WTC11 (cell line): ENCODE measurements at regions of chr1 and their contacts with region 1.

Region 1: DNA sequence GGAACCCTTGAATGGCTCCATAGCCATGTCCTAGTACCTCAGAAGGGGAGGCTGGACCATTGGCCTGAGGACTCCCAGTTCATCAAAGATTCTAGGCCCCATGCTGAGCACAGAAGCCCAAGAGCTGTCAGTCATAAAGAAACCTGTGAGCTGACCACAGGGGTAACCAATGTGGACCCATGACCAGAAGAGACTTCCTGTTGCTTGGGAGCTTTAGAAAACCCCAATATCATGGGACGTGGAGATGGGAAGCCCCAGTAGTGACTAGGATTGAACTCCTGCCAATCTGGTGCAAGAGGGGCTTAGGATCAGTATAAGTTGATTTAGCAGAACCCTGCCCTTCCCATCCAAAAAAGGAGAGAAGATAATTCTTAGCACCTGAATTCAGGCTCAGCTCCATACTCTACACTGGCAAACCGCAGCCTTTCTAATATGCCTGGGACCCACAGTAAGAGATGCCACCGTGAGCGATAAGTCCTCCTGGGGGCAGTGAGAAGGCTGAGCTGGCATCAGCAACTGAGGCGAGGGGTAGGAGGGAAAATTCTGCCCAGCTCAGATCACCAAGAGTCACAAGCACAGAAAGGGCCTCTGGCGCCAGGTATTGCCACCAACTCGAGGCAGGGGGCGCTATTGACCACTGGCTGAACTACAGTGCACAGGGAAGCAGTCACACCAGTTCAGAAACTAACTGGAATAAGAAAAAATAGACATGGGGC is 108.9 kb downstream of the CAPN8 start:
- DNase-seq: peak; percentile 86
- ATAC-seq: peak; percentile 95
- H3K4me3 Mint-ChIP-seq: no peak overlapping the region
- H3K27ac Mint-ChIP-seq: no peak overlapping the region
- H3K4me1 Mint-ChIP-seq: no peaks in the 10 kb centered on the region
- H3K27me3 Mint-ChIP-seq: no peaks in the 10 kb centered on the region
- CTCF ChIP-seq: peak; percentile 77

Region 2: GRCh38 chr1:223403184-223403815 is 153.3 kb before region 1 on chr1:
- CTCF ChIA-PET with region 1: no interaction called
- POLR2A ChIA-PET with region 1: no interaction called
- DNase-seq: no peak
- ATAC-seq: no peak
- H3K4me3 Mint-ChIP-seq: no peak overlapping the region
- H3K27ac Mint-ChIP-seq: no peak overlapping the region
- H3K4me1 Mint-ChIP-seq: peaks cover 10% of the 10 kb centered on the region
- H3K27me3 Mint-ChIP-seq: peaks cover 2% of the 10 kb centered on the region; the same call in 1 of the 2 replicates
- CTCF ChIP-seq: no peak

Region 3: DNA sequence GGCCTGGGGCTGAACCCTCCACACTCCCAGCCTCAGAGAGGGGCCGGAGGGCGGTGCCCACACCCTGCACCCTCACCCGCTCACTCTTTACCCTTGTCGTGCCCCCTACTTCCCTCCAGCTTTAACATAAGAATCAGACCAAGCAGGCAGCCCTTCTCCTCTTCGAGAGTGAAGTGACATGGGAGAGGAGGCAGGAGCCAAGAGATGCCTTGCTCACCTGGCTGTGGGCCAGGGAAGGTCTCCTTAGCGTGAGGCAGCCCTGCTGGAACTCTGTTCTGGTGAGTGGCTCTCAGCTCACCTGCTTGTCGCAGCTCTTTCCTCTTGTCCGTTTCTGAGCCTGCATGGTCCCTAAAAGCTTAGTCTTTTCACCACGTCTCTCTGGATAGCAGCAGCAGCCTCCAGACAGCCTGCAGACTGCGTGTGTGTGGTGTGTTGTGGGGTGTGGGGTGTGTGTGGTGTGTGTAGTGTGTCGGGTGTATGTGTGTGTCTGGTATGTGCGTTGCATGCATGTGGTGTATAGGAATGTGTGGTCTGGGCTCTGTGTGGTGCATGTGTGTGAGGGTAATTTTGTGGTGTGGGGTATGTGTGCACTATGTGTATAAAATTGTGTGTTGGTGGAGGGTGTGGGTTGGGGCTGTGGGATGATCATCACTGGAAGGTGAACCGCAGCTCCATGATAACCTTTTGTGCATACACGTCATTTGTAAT is 76.7 kb before region 1 on chr1:
- CTCF ChIA-PET with region 1: interaction called, 10 read pairs
- POLR2A ChIA-PET with region 1: no interaction called
- DNase-seq: no peak
- ATAC-seq: peak; percentile 84
- H3K4me3 Mint-ChIP-seq: peak overlapping the region; percentile 34
- H3K27ac Mint-ChIP-seq: no peak overlapping the region; the same call in 1 of the 2 replicates
- H3K4me1 Mint-ChIP-seq: peaks cover 14% of the 10 kb centered on the region
- H3K27me3 Mint-ChIP-seq: no peaks in the 10 kb centered on the region; the same call in 1 of the 2 replicates
- CTCF ChIP-seq: no peak

Region 4: DNA sequence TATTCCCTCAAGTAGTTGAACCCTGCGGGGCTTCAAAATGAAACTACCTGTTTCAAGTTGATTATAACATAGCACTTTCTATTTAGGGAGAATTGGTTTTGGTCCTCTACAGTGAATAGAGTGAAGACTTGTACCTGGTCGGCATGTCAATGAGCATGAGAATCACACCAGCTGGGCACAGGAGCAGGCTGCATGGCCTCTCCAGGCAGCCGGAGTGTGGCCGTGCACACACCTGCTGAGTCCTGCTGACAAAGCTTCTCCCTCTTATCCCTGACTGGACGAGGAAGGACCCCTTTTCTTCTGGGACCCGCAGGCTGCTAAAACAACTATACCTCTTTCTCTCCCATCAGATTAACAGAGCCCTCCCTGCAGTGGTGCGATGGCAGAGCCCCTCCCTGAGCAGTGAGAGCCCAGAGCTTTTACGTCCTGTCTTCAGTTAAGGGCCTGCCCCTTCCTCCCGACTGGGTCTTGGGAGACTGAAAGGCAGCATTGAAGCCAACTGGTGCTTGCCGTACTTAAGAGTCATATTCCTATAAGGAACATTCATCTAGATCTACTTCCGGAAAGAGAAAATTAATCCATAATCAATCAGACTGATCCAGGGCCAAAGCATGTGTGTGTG is 16.0 kb before region 1 on chr1:
- CTCF ChIA-PET with region 1: interaction called, 17 read pairs
- POLR2A ChIA-PET with region 1: no interaction called
- DNase-seq: no peak
- ATAC-seq: no peak
- H3K4me3 Mint-ChIP-seq: no peak overlapping the region
- H3K27ac Mint-ChIP-seq: no peak overlapping the region
- H3K4me1 Mint-ChIP-seq: no peaks in the 10 kb centered on the region
- H3K27me3 Mint-ChIP-seq: no peaks in the 10 kb centered on the region; the same call in 1 of the 2 replicates
- CTCF ChIP-seq: no peak

Region 5: GRCh38 chr1:223621312-223621734 is 64.8 kb after region 1 on chr1:
- CTCF ChIA-PET with region 1: interaction called, 24 read pairs
- POLR2A ChIA-PET with region 1: no interaction called
- DNase-seq: no peak
- ATAC-seq: no peak
- H3K4me3 Mint-ChIP-seq: no peak overlapping the region
- H3K27ac Mint-ChIP-seq: no peak overlapping the region; the same call in 1 of the 2 replicates
- H3K4me1 Mint-ChIP-seq: peaks cover 9% of the 10 kb centered on the region
- H3K27me3 Mint-ChIP-seq: no peaks in the 10 kb centered on the region
- CTCF ChIP-seq: no peak

Region 6: GRCh38 chr1:223652436-223652941 is 95.9 kb after region 1 on chr1:
- CTCF ChIA-PET with region 1: interaction called, 13 read pairs
- POLR2A ChIA-PET with region 1: no interaction called
- DNase-seq: no peak
- ATAC-seq: peak; percentile 70
- H3K4me3 Mint-ChIP-seq: no peak overlapping the region
- H3K27ac Mint-ChIP-seq: no peak overlapping the region
- H3K4me1 Mint-ChIP-seq: peaks cover 26% of the 10 kb centered on the region
- H3K27me3 Mint-ChIP-seq: peaks cover 3% of the 10 kb centered on the region; the same call in 1 of the 2 replicates
- CTCF ChIP-seq: no peak

Region 7: DNA sequence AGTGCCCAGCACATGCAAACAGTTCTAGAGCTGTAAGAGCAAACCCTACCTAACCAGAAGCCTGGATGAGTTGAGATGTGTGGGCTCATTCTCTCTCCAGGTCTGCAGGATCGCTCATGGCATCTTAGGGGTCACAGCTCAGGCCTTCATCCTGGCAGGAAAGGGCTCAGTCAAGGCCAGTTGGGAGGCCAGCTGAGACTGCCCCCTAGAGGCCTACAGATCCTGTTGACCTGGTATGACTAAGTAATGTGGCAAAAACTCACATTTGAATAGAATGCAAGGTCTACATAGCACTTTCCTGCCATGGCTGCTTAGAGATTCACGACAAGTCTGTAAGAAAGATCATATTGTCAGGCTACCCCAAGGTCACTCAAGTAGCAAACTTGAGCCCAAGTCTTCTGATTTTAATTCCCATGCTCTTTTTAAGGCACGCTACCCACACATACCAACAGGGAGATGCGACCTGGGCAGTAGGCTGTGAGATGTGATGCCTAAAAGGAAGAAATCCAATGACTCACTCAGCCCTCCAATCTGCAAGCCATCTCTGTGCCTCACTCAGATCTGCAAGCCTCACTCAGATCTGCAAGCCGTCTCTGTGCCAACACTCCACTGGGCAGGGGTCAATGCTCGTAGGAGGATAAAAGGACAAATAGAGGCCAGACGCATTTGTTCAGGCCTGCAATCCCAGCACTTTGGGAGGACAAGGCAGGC is 114.0 kb after region 1 on chr1:
- CTCF ChIA-PET with region 1: interaction called, 13 read pairs
- POLR2A ChIA-PET with region 1: no interaction called
- DNase-seq: peak; percentile 66
- ATAC-seq: peak; percentile 97
- H3K4me3 Mint-ChIP-seq: no peak overlapping the region
- H3K27ac Mint-ChIP-seq: no peak overlapping the region
- H3K4me1 Mint-ChIP-seq: peaks cover 3% of the 10 kb centered on the region; the same call in 1 of the 2 replicates
- H3K27me3 Mint-ChIP-seq: peaks cover 10% of the 10 kb centered on the region
- CTCF ChIP-seq: peak; percentile 63; the same call in 1 of the 2 replicates

Region 8: DNA sequence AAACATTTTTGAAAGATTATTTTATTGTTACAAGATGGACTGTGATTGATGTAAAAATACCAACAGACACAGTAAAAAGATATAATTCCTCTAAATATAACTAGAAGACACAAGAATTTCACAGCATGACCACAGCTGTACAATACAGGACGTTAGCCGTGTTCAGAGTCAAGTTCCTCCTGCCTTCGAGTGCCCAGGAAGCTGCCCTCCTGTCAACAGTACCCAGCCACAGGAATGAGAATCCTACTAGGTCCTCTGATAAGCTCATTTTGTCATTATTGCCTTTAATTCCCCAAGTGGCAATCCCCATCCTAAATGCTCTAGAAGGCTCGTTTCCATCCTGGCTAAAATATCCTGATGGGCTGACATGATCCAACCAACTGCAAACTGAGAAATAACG is 139.4 kb after region 1 on chr1:
- CTCF ChIA-PET with region 1: interaction called, 11 read pairs
- POLR2A ChIA-PET with region 1: no interaction called
- DNase-seq: no peak
- ATAC-seq: no peak
- H3K4me3 Mint-ChIP-seq: no peak overlapping the region
- H3K27ac Mint-ChIP-seq: no peak overlapping the region
- H3K4me1 Mint-ChIP-seq: no peaks in the 10 kb centered on the region; the same call in 1 of the 2 replicates
- H3K27me3 Mint-ChIP-seq: no peaks in the 10 kb centered on the region; the same call in 1 of the 2 replicates
- CTCF ChIP-seq: no peak